ENCODE measurements at regions of chr10 and their contacts with region 1.

Region 1: DNA sequence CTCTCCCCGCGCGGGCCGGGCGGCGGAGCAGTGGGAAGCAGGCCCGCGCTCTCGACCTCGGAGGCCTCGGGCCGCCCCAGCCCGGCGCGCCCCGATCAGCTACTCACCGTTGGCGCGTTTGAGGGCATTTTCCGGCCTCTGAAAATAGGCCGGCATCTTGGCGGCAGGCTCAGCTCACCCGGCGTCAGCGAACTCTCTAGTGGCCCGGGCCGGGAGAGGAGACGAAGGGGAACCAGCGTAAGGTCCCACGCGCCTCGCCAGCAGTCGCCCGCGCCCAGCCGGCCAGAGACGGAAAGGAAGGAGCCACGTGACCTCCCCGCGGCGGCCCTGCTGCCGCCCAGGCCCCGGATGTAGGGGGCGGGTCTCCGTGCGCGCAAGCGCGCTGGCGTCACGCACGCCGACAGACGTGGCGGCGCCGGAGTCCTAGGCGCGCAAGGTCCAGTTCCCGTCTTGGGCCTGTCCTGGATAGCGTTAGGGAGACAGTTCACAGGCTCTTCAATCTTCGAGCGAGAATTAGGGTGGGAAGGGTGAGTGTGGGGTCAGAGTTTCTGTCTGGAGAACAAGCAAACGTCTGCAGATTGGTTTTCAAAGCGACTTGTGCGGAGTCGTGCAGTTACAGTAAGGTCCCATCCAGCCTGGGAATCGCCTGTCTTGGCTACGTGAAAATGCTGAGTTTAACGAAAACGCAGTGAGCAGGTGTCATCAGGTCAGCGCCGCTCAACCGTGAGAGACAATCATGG is at the start of gene EIF3A:
- DNase-seq: peak; percentile 86 to 92
- H3K4me3 ChIP-seq: peak within 1 kb of the TSS; percentile 97 to 99 (median 98)
- H3K27ac ChIP-seq: peak within 1 kb of the TSS; percentile 99 to 100
- H3K4me1 ChIP-seq: no peaks in the 10 kb centered on the region
- H3K27me3 ChIP-seq: no peaks in the 10 kb centered on the region
- CTCF ChIP-seq: no peak
- POLR2A ChIP-seq: peak; percentile 88
- total RNA-seq, gene EIF3A: 117 to 166 (median 124) TPM

Region 2: DNA sequence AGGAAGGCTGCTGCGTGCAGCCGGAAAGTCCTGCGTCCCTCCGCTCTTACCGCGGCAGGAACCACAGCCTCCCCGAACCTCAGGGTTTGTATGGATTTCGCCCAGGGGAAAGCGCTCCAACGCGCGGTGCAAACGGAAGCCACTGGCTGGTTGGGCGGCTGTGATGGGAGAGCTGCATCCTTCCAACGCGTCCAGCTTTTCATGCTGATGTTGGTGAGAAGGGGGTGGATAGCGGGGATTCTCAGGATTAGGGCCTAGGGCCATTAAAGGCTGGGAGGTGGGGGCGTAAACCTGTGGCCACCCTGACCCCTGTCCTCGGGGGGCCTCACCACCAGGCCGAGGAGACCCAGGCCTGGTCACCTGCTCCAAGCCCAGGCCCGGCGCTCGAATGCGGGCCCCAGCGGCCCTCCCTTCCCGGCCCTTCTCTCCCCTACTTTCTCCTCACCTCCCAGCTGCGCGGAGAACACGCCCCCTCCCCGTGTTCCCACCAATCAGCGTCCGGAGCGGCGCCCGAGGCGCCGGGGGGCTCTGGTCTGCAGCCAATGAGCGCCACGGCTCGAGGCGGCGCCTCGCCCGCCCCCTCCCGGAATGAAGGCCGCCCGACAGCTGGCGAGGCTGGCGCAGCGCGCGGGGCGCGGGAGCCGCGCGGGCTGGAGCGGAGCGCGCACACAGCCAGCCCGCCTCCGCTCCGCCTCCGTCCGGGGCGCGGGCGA is 51.6 kb before region 1 on chr10:
- intact Hi-C with region 1: loop called (anchors 2 kb)
- DNase-seq: peak; percentile 79 to 82
- H3K4me3 ChIP-seq: peak overlapping the region; percentile 42 to 85 (median 67)
- H3K27ac ChIP-seq: peak overlapping the region; percentile 69 to 74
- H3K4me1 ChIP-seq: peaks cover 9 to 10% of the 10 kb centered on the region in 2 donors
- H3K27me3 ChIP-seq: no peaks in the 10 kb centered on the region
- CTCF ChIP-seq: no peak
- POLR2A ChIP-seq: no peak